ENCODE measurements at regions of chr18 and their contacts with region 1.

Region 1: GRCh38 chr18:50203801-50204604 is 9.1 kb upstream of the MYO5B start:
- DNase-seq: no peak
- H3K4me3 Mint-ChIP-seq: no peak overlapping the region
- H3K27ac Mint-ChIP-seq: no peak overlapping the region
- H3K4me1 Mint-ChIP-seq: peaks cover 7% of the 10 kb centered on the region
- H3K27me3 Mint-ChIP-seq: peaks cover 55% of the 10 kb centered on the region

Region 2: DNA sequence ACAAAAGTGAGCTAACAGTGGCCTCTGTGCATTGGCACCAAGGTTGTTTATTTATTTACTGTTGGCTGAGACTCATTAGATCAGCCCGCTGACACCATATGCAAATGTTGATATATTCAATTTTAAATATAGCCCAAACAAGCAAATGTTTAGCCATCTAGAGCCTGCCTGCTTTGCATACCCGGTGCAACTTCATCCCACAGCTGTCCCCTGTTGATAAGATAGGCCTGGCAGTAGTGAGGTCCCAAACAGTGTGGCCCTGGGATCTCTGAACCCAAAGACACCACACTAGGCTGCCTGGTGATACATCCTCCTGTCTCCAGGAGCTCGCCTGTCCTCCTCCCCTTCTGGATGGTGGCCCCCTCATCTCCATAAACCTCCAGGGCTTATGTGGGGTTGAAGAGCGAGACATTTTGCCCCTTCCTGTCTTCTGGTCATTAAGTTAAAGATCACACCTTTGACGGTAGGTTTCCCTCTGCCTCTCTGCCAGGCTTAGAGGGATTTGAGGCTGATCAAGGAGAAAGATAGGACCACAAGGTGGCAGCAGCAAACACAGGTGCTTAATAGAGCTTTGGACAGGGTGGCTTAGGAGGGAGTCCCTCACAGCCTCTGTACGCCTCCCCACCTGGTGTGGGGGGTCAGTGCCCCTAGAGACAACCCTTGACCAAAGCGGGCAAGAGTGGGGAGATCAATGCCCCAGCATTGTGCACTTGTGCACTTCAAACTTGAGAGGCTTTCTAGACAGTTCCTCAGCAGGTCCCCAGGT is 14.6 kb after region 1 on chr18:
- CTCF ChIA-PET with region 1: interaction called, 13 read pairs
- POLR2A ChIA-PET with region 1: no interaction called
- DNase-seq: peak; percentile 46
- H3K4me3 Mint-ChIP-seq: no peak overlapping the region
- H3K27ac Mint-ChIP-seq: no peak overlapping the region
- H3K4me1 Mint-ChIP-seq: no peaks in the 10 kb centered on the region
- H3K27me3 Mint-ChIP-seq: peaks cover 39% of the 10 kb centered on the region

Measured in activated CD4-positive, alpha-beta memory T cell treated with anti-CD3 and anti-CD28 coated beads, Interleukin-2, amount 10 ng/mL, durations not matched to agents 7 days and 5 days (primary cell).